Activated CD4-positive, alpha-beta memory T cell treated with anti-CD3 and anti-CD28 coated beads for 36 hours (primary cell): ENCODE measurements at regions of chr16 and their contacts with region 1.

Region 1: GRCh38 chr16:85055503-85056210 is 28.1 kb downstream of the KIAA0513 start:
- DNase-seq: peak; percentile 90
- H3K4me3 Mint-ChIP-seq: peak overlapping the region; percentile 64
- H3K27ac Mint-ChIP-seq: peak overlapping the region; percentile 90
- H3K4me1 Mint-ChIP-seq: peaks cover 39% of the 10 kb centered on the region
- H3K27me3 Mint-ChIP-seq: no peaks in the 10 kb centered on the region

Region 2: GRCh38 chr16:84166796-84167695 is 888.6 kb before region 1 on chr16:
- CTCF ChIA-PET with region 1: no interaction called
- POLR2A ChIA-PET with region 1: no interaction called
- intact Hi-C with region 1: loop called (anchors 5 kb)
- DNase-seq: peak; percentile 78
- H3K4me3 Mint-ChIP-seq: no peak overlapping the region
- H3K27ac Mint-ChIP-seq: no peak overlapping the region
- H3K4me1 Mint-ChIP-seq: peaks cover 4% of the 10 kb centered on the region
- H3K27me3 Mint-ChIP-seq: peaks cover 29% of the 10 kb centered on the region

Region 3: DNA sequence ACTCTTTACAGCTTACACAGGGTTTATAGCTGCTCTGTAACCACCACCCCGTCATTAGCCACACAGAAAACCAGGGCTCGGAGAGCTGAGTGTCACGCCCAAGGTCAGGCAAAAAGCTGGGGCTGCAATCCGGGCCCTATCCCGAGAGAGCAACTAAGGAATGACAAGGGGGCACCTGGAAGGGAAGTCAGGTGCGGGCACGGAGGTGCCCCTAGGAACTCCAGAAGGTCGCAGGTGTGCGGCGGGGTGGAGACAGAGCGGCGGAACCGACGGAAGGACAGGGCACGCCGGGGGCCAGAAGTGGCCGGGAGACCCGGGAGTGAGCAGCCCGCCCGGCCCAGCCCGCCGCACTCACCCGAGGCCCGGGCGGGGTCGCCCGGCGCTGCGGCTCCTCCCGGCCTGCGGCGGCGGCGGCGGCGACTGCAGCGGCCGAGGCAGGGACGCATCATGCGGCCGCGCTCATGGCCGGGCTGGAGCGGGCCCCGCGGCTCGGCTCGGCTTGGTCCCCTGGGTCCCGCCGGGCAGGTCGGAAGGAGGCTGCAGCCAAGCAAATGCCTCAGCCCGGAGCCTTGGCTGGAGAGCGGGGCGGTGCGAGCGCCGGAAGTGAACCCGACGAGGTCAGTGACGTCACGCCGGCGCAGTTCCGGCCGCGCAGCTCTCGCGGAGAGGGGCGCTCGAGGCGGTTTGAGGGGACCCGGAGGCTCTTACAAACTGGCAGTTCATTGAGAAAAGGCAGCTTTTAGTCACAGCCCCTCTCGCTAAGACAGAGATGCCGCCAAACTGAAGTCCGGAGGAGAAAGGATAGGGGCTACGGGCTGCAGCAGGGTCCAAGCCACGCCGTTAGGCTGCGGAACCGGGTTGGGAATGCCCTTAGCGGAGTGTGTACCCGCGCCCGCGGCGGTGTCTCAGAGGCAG is 44.5 kb before region 1 on chr16 and contains the start of gene ZDHHC7:
- CTCF ChIA-PET with region 1: interaction called, 6 read pairs
- POLR2A ChIA-PET with region 1: interaction called, 6 read pairs
- intact Hi-C with region 1: loop called (anchors 2 kb)
- DNase-seq: peak; percentile 89
- H3K4me3 Mint-ChIP-seq: peak within 1 kb of the TSS; percentile 99
- H3K27ac Mint-ChIP-seq: peak within 1 kb of the TSS; percentile 92
- H3K4me1 Mint-ChIP-seq: peaks cover 37% of the 10 kb centered on the region
- H3K27me3 Mint-ChIP-seq: no peaks in the 10 kb centered on the region
- total RNA-seq, gene ZDHHC7: 23.5 to 25.1 TPM

Region 4: GRCh38 chr16:85137323-85138072 is 81.8 kb after region 1 on chr16:
- CTCF ChIA-PET with region 1: no interaction called
- POLR2A ChIA-PET with region 1: no interaction called
- intact Hi-C with region 1: no loop called
- DNase-seq: no peak
- H3K4me3 Mint-ChIP-seq: no peak overlapping the region
- H3K27ac Mint-ChIP-seq: no peak overlapping the region
- H3K4me1 Mint-ChIP-seq: no peaks in the 10 kb centered on the region
- H3K27me3 Mint-ChIP-seq: peaks cover 33% of the 10 kb centered on the region